Body of pancreas (tissue), 4 donors: ENCODE measurements at regions of chr15 and their contacts with region 1.

Region 1: DNA sequence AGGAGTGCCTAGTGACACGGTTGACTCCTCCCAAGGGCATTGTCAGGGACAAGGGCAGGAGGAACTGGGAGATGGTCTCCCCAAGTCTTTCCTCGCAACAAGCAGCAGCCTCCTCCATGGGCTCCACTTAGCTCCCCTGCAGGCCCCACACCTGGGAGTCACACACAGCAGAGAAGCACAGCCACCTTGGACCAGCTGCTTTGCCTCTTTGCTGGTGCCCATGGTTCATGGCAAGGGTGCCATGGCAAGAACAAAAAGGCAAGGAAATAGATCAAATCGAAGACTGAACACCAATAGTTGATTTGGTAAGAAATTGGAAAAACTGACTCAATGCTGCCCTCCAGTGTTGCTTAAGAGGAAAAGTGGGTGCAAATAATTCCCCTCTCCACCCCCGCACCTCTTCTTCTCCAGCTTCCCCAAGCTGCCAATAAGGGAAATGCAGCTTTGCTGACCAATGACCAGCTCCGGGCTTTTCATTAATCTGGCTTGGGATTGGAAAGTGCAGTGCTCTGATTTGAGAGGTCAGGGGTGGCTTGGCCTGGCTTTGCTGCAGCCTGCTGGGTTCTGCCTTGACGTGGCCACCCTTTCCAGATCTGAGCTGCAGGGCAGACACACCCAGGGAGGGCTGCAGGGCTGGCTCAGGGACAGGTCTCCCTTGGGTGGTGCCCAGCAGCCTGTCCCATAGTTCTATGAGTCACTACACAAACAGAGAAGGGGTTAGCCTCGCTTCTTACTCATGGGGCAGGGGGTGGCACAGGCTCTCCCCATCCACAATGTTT is 162.0 kb downstream of the KLF13 start:
- DNase-seq: peak; percentile 60 to 83 (median 72)
- ATAC-seq: peak; percentile 90
- H3K4me3 ChIP-seq: no peak overlapping the region
- H3K27ac ChIP-seq: peak overlapping the region; percentile 6 to 43 (median 34)
- H3K4me1 ChIP-seq: peaks cover 29% of the 10 kb centered on the region
- H3K27me3 ChIP-seq: no peaks in the 10 kb centered on the region
- CTCF ChIP-seq: peak; percentile 85 to 99 (median 98)
- POLR2A ChIP-seq: no peak

Region 2: DNA sequence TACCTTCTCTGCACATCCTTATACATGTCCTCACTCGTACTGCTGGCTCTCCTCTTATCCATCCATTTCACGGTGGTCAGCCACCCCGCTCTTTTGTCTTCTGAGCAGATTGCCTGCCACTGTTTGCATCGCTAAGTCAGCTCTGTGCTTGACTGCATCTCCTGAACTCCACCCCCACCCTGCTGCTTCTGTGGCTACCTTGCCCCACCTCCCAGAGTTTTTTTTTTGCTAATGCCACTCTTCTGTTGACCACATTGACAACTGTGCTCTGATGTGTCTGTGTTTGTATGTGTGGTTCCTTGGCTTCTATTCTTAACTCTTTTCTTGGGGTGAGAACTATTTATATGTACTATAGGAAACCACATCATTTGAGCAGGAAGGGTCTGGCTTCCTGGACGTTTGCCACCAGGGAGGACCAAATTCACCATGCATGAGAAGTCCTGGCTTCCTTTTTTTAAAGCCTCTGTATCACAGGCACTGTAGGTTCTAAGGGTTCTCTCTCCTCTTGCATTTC is 484.3 kb before region 1 on chr15:
- intact Hi-C with region 1: no loop called
- DNase-seq: peak in 3 of 4 donors; percentile 14 to 46 (median 24)
- ATAC-seq: peak; percentile 50
- H3K4me3 ChIP-seq: no peak overlapping the region
- H3K27ac ChIP-seq: no peak overlapping the region
- H3K4me1 ChIP-seq: no peaks in the 10 kb centered on the region
- H3K27me3 ChIP-seq: no peaks in the 10 kb centered on the region
- CTCF ChIP-seq: no peak
- POLR2A ChIP-seq: no peak

Region 3: DNA sequence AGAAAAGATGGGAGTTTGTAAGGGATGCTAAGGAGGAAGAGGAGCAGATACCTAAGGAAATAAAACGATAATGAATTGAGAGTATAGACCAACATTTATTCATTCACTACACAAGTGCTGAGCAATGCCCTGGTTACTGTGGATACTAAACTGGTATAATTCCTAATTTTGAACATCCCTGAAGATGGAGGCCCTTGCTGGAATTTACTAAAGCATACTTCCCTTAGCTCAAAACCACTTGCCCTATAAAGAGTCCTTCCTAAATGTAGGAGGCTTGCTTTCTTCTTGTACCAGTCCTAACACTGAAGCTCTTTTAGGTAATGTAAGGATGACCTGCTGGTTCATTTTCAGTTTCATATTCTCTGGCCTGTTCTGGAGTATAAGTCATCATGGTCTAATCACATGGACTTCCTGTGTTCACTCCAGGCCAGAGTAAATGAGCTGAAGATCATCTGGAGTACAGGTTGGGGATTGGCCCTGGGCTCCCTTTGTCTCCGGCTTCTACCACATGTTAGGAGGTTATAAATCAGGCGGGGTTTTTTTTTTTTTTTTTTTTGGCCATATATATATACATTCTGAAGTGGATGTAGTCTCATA is 457.0 kb before region 1 on chr15:
- intact Hi-C with region 1: no loop called
- DNase-seq: no peak
- ATAC-seq: no peak
- H3K4me3 ChIP-seq: no peak overlapping the region
- H3K27ac ChIP-seq: no peak overlapping the region
- H3K4me1 ChIP-seq: no peaks in the 10 kb centered on the region
- H3K27me3 ChIP-seq: no peaks in the 10 kb centered on the region
- CTCF ChIP-seq: no peak
- POLR2A ChIP-seq: no peak

Region 4: DNA sequence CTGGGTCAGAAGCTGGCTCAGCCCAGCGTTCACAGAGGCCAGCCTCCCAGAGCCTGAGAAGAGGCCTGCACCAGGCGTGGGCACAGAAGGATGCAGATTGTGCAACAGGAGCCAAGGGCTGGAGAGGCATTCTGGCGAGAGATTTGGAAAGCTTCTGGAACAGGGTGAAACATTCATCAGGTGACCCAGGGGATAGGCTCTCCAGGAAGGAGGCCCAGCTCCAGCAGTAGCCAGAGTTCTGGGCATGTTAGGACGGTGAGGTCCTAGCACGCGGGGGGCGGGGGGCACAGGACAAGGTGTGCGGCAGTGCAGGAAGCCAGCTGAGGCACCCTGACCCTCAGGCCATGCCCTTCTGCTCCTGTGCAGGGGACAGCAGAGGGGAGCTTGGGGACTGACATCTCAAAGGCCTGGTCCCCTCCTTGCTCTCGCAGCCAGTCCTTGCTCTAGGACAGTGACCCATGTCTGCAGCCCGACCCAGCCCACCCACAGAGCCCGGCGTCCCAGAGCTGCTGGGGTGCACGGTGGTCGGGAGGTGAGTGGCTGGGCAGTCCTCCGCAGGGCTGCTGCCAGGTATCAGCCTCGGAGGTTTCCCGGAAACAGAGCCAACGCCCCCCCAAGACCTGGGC is 273.6 kb before region 1 on chr15:
- intact Hi-C with region 1: loop called (anchors 5 kb)
- DNase-seq: peak; percentile 25 to 63 (median 45)
- ATAC-seq: peak; percentile 29
- H3K4me3 ChIP-seq: no peak overlapping the region
- H3K27ac ChIP-seq: peak overlapping the region; percentile 74 to 91 (median 84)
- H3K4me1 ChIP-seq: peaks cover 18% of the 10 kb centered on the region
- H3K27me3 ChIP-seq: no peaks in the 10 kb centered on the region
- CTCF ChIP-seq: no peak
- POLR2A ChIP-seq: no peak

Region 5: GRCh38 chr15:31402511-31403056 is 86.0 kb before region 1 on chr15:
- intact Hi-C with region 1: loop called (anchors 10 kb)
- DNase-seq: peak in 1 of 4 donors; percentile 38
- ATAC-seq: peak; percentile 64
- H3K4me3 ChIP-seq: no peak overlapping the region
- H3K27ac ChIP-seq: peak overlapping the region in 1 of 4 donors; percentile 32
- H3K4me1 ChIP-seq: peaks cover 9% of the 10 kb centered on the region
- H3K27me3 ChIP-seq: no peaks in the 10 kb centered on the region
- CTCF ChIP-seq: no peak
- POLR2A ChIP-seq: no peak

Region 6: DNA sequence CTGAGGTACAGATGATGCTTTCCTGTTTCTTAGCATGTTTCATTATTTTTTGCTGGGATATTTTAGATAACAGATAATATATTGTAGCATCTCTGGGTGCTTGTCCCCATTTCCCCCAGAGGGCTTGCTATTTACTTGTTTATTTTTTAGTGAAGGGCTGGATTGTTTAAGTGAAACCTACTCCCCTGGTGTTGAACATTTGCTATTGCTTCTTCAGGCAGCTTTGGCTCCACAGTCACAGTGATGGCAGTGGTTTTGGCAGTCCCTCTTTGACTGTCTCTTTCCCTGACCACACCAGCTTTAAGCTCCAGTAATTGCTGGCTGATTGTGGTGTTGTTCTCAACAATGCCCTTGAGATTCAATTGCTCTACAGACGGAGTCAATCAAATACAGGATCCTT is 33.1 kb before region 1 on chr15:
- intact Hi-C with region 1: no loop called
- DNase-seq: no peak
- ATAC-seq: no peak
- H3K4me3 ChIP-seq: no peak overlapping the region
- H3K27ac ChIP-seq: no peak overlapping the region
- H3K4me1 ChIP-seq: no peaks in the 10 kb centered on the region
- H3K27me3 ChIP-seq: no peaks in the 10 kb centered on the region
- CTCF ChIP-seq: no peak
- POLR2A ChIP-seq: no peak

Region 7: DNA sequence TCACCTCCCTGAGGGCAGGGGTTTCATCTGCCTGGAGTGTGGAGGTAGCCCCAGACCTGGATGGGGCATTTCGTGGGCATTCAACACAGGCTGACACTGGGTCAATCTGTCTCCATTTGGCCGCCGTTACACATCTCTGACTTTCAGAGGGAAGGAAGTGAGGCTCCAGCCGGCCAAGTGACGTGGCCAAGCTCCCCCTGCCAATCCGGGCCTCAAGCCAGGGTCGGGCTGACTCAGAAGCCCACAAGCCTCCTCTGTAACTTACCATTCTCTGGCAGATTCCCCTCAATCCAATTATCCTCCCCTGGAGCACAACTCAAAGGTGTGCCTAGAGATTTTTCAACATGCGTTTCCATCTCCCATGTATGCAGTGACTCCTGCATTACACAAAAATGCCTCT is 65.6 kb after region 1 on chr15:
- intact Hi-C with region 1: no loop called
- DNase-seq: peak in 1 of 4 donors; percentile 21
- ATAC-seq: peak; percentile 60
- H3K4me3 ChIP-seq: no peak overlapping the region
- H3K27ac ChIP-seq: no peak overlapping the region
- H3K4me1 ChIP-seq: no peaks in the 10 kb centered on the region
- H3K27me3 ChIP-seq: no peaks in the 10 kb centered on the region
- CTCF ChIP-seq: no peak
- POLR2A ChIP-seq: no peak